CD14-positive monocyte (primary cell): ENCODE measurements at regions of chr7 and their contacts with region 1.

Region 1: DNA sequence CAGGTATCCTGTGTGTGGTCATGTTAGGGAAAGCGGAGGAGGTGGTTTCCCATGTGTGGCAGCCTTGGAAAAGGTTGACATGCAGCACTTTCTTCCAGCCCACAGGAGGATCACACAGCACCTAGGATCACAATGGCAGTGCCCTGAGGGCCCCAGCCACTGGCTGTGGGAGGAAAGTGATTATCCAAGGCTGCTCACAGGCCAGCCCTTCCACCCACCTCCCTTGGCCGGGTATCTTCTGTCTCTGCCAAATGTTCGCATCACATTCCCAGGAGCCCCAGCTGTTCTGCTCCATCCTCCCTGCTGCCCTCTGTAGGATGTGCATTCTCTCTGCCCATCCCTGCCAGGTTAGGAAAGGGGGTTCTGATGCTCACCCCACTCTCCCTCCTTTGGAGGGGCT is 2.5 kb upstream of the MLXIPL start:
- DNase-seq: no peak
- H3K4me3 ChIP-seq: no peak overlapping the region
- H3K4me3 Mint-ChIP-seq: peak overlapping the region in 1 of 2 donors; percentile 30
- H3K27ac ChIP-seq: no peak overlapping the region
- H3K27ac Mint-ChIP-seq: no peak overlapping the region
- H3K4me1 ChIP-seq: peaks cover 16 to 17% of the 10 kb centered on the region in 2 donors
- H3K4me1 Mint-ChIP-seq: peaks cover 10% of the 10 kb centered on the region
- H3K27me3 ChIP-seq: peaks cover 38 to 69% of the 10 kb centered on the region in 2 donors
- H3K27me3 Mint-ChIP-seq: peaks cover 68 to 90% (median 89%) of the 10 kb centered on the region in 3 donors
- CTCF ChIP-seq: no peak

Region 2: DNA sequence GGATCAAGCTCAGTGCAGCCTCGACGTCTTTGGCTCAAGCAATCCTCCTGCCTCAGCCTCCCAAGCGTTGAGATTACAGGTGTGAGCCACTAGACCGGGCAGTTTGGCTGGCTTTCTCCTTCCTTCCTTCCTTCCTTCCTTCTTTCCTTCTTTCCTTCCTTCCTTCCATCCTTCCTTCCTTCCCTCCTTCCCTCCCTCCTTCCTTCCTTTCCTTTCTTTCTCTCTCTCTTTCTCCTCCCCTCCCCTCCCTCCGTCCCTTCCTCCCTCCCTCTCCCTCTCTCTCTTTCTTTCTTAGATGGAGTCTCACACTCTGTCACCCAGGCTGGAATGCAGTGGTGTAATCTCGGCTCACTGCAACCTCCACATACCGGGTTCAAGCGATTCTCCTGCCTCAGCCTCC is 33.2 kb after region 1 on chr7:
- intact Hi-C with region 1: loop called in 1 of 2 experiments (anchors 5 kb)
- DNase-seq: no peak
- H3K4me3 ChIP-seq: no peak overlapping the region
- H3K4me3 Mint-ChIP-seq: no peak overlapping the region
- H3K27ac ChIP-seq: no peak overlapping the region
- H3K27ac Mint-ChIP-seq: no peak overlapping the region
- H3K4me1 ChIP-seq: no peaks in the 10 kb centered on the region
- H3K4me1 Mint-ChIP-seq: no peaks in the 10 kb centered on the region
- H3K27me3 ChIP-seq: peaks cover 0 to 4% of the 10 kb centered on the region in 2 donors
- H3K27me3 Mint-ChIP-seq: peaks cover 48 to 56% (median 48%) of the 10 kb centered on the region in 3 donors
- CTCF ChIP-seq: no peak

Region 3: DNA sequence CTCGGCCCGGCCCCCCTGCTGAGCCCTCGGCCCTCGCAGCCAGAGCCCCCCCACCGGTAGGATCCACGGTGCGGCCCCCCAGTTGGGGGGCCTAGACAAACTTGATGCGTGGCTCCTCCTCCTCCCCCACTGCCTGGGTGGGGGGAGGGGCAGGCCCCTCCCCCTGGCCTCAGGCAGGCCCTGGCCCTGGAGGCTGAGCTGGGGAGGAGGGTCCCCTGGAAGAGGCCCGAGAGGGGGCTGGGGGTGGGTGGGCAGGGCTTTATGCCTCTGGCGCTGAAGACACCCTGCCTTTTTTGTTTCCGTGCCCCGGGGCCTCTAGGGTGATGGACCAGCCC is 44.5 kb after region 1 on chr7:
- intact Hi-C with region 1: no loop called
- DNase-seq: no peak
- H3K4me3 ChIP-seq: no peak overlapping the region
- H3K4me3 Mint-ChIP-seq: no peak overlapping the region
- H3K27ac ChIP-seq: no peak overlapping the region
- H3K27ac Mint-ChIP-seq: no peak overlapping the region
- H3K4me1 ChIP-seq: peaks cover 9 to 13% of the 10 kb centered on the region in 2 donors
- H3K4me1 Mint-ChIP-seq: peaks cover 10% of the 10 kb centered on the region
- H3K27me3 ChIP-seq: peaks cover 20 to 56% of the 10 kb centered on the region in 2 donors
- H3K27me3 Mint-ChIP-seq: peaks cover 47 to 72% (median 59%) of the 10 kb centered on the region in 3 donors
- CTCF ChIP-seq: no peak